Endothelial cell of umbilical vein (primary cell): ENCODE measurements at regions of chr3 and their contacts with region 1.

Region 1: DNA sequence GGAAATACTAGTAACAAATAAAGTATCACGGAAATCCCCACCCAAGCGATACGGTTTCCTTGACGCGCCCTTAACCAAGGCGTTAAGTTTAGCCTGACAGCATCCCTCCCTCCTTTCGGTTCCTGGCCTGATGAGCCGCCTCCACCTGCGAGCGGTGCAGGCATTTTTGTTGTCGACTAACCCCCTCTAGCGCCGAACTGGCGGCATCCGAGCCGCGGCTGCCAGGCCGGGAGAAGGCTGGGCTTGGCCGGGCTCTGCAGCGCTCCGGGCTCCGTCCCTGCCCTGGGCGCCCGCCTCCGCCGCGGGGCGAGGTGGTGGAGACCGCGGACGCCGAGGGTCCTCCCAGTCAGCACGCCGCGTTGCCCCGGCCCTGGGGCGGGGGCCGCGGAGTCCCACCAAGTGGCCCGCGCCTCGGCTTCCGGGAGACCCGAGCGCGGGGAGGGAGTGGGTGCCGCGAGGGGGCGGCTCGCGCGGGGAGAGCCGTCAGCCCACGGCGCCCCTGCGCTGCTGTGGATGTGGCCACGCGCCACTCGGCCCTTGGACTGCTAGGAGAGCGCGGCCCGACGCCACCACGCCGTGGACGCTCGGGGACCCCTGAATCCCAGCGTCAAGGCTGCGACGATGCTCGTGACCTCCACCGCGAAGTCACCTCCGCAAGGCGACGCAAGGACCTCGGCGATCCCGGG is 1.1 kb upstream of the EPHA6 start:
- DNase-seq: peak; percentile 59
- H3K4me3 ChIP-seq: peak overlapping the region in 2 of 3 experiments; percentile 39 to 44
- H3K27ac ChIP-seq: no peak overlapping the region
- H3K4me1 ChIP-seq: peaks cover 7% of the 10 kb centered on the region
- H3K27me3 ChIP-seq: peaks cover 17 to 33% of the 10 kb centered on the region in 2 experiments
- CTCF ChIP-seq: peak; percentile 58 to 63
- POLR2A ChIP-seq: no peak

Region 2: GRCh38 chr3:96022676-96023075 is 790.6 kb before region 1 on chr3:
- CTCF ChIA-PET with region 1: no interaction called
- POLR2A ChIA-PET with region 1: no interaction called
- dilution Hi-C with region 1: no loop called
- intact Hi-C with region 1: loop called (anchors 10 kb)
- DNase-seq: no peak
- H3K4me3 ChIP-seq: no peak overlapping the region
- H3K27ac ChIP-seq: no peak overlapping the region
- H3K4me1 ChIP-seq: no peaks in the 10 kb centered on the region
- H3K27me3 ChIP-seq: no peaks in the 10 kb centered on the region
- CTCF ChIP-seq: no peak
- POLR2A ChIP-seq: no peak

Region 3: DNA sequence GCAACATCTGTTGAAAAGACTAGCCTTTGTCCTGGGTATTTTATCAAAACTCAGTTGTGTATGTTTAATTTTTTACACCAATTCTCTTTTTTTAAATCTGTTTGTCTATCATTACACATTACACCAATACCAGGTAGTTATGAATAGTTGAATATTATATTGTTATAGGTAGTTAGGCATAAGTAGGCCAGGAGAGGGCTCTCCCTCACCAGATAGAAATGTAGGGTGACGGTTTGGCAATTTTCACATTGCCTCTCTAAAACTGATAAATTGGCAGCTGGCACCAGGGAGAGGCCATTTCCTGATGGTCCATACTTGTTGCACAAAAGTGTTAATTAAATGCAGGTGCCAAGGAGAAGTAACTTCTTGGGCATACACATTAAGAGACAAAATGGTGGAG is 481.9 kb before region 1 on chr3:
- CTCF ChIA-PET with region 1: interaction called, 11 read pairs
- POLR2A ChIA-PET with region 1: no interaction called
- dilution Hi-C with region 1: no loop called
- intact Hi-C with region 1: loop called (anchors 1 kb)
- DNase-seq: peak; percentile 43
- H3K4me3 ChIP-seq: no peak overlapping the region
- H3K27ac ChIP-seq: no peak overlapping the region
- H3K4me1 ChIP-seq: no peaks in the 10 kb centered on the region
- H3K27me3 ChIP-seq: no peaks in the 10 kb centered on the region
- CTCF ChIP-seq: peak; percentile 15 to 29
- POLR2A ChIP-seq: no peak